Pancreas (tissue), 10 donors: ENCODE measurements at regions of chr20 and their contacts with region 1.

Region 1: GRCh38 chr20:58246346-58246745 is 17.9 kb upstream of the ANKRD60 start:
- DNase-seq: no peak
- ATAC-seq: peak in 1 of 4 donors; percentile 20
- H3K4me3 ChIP-seq: no peak overlapping the region
- H3K27ac ChIP-seq: no peak overlapping the region
- H3K4me1 ChIP-seq: no peaks in the 10 kb centered on the region
- H3K27me3 ChIP-seq: no peaks in the 10 kb centered on the region
- CTCF ChIP-seq: no peak

Region 2: GRCh38 chr20:58039274-58040092 is 206.9 kb before region 1 on chr20:
- intact Hi-C with region 1: no loop called
- DNase-seq: no peak
- ATAC-seq: no peak
- H3K4me3 ChIP-seq: no peak overlapping the region
- H3K27ac ChIP-seq: no peak overlapping the region
- H3K4me1 ChIP-seq: no peaks in the 10 kb centered on the region
- H3K27me3 ChIP-seq: no peaks in the 10 kb centered on the region
- CTCF ChIP-seq: no peak

Region 3: DNA sequence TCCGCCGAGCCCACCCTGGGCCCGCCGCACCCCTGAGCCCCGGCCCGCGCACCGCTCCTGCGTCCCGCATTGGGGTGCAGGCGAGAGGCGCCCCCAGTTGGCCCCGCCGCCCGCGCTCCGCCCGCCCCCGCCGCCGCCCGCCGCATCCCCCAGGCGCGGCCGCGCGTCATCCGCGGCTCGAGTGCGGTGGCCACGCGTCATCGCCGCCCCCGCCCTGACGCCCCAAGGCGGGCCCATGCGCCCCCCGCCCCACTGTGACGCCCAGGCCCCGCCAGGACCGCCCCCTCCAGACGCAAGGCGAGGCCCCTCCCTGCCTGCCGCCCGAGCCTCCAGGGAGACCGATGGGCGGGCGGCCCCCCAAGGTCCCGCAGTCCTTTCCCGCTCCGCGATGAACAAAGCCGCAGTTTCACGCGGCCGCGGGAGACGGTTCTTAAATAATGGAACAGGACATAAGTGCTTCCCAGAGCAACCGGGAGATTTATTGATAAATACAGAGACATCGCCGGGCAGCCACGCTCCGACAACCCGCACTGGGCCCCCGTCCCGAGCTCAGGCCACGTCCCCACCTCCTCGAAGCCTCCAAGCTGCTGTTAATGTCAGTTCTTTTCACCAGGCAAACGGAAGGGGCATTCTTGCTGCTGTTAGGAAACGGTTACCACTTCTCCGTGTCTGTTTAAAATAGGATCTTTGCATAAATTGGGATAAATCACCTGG is 17.7 kb before region 1 on chr20 and contains the start of gene ANKRD60:
- intact Hi-C with region 1: no loop called
- DNase-seq: peak in 2 of 6 donors; percentile 58 to 61
- ATAC-seq: peak in 1 of 4 donors; percentile 44
- H3K4me3 ChIP-seq: no peak within 1 kb of the TSS
- H3K27ac ChIP-seq: no peak within 1 kb of the TSS
- H3K4me1 ChIP-seq: no peaks in the 10 kb centered on the region
- H3K27me3 ChIP-seq: peaks cover 0 to 27% (median 3%) of the 10 kb centered on the region in 4 donors
- CTCF ChIP-seq: no peak
- total RNA-seq, gene ANKRD60: not detected

Region 4: GRCh38 chr20:58447511-58448391 is 201.4 kb after region 1 on chr20:
- intact Hi-C with region 1: loop called in 1 of 3 experiments (anchors 10 kb)
- DNase-seq: peak in 2 of 6 donors; percentile 23 to 48
- ATAC-seq: peak; percentile 73 to 90 (median 87)
- H3K4me3 ChIP-seq: no peak overlapping the region
- H3K27ac ChIP-seq: no peak overlapping the region
- H3K4me1 ChIP-seq: no peaks in the 10 kb centered on the region
- H3K27me3 ChIP-seq: no peaks in the 10 kb centered on the region
- CTCF ChIP-seq: peak; percentile 28 to 34 (median 32)

Region 5: GRCh38 chr20:58839991-58840759 is 593.8 kb after region 1 on chr20:
- intact Hi-C with region 1: loop called in 1 of 3 experiments (anchors 10 kb)
- DNase-seq: peak in 1 of 6 donors; percentile 64
- ATAC-seq: peak in 1 of 4 donors; percentile 22
- H3K4me3 ChIP-seq: peak overlapping the region in 1 of 4 donors; percentile 7
- H3K27ac ChIP-seq: no peak overlapping the region
- H3K4me1 ChIP-seq: no peaks in the 10 kb centered on the region
- H3K27me3 ChIP-seq: no peaks in the 10 kb centered on the region
- CTCF ChIP-seq: no peak